Calu3 (cell line): ENCODE measurements at regions of chr1 and their contacts with region 1.

Region 1: DNA sequence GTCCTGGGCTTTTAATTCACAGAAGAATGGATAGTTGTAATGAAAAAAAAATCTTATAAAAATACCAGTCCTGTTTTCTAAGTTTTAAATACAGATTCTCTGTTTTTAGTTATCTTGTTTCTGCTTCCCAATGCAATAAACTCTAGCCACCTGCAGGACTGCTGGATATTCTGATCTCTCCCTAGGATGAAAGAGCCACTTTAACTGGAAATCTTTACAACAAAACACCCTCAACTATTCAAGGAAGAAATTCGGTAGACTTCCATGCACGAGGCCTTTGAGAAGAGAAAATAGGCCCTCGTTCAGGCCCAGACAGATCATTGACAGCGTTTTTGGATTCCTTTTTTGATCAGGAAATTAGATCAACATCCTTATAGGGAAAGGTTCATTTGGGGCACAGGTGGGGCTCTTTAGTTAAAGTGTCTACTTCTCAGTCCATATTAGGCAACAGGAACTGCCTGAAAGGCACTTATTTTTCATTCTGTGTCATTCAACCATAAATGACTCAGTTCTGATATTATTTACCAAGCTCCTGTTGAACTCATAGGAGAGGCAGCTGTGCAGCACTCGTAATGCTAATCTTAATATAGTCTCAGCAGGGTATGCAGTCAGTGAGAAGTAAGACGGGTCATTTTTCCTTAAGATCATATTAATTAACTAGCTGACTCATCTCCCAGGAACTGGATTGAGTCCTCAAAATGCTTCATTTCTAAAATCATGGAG is 71.1 kb upstream of the ERRFI1 start:
- DNase-seq: peak; percentile 50
- H3K4me3 Mint-ChIP-seq: peak overlapping the region; percentile 24
- H3K27ac Mint-ChIP-seq: peak overlapping the region; percentile 91
- H3K4me1 Mint-ChIP-seq: peaks cover 56% of the 10 kb centered on the region
- H3K27me3 Mint-ChIP-seq: no peaks in the 10 kb centered on the region
- CTCF ChIP-seq: no peak

Region 2: GRCh38 chr1:7942214-7942921 is 154.9 kb before region 1 on chr1:
- CTCF ChIA-PET with region 1: no interaction called
- intact Hi-C with region 1: no loop called
- DNase-seq: peak; percentile 31
- H3K4me3 Mint-ChIP-seq: peak overlapping the region; percentile 41
- H3K27ac Mint-ChIP-seq: no peak overlapping the region
- H3K4me1 Mint-ChIP-seq: peaks cover 24% of the 10 kb centered on the region
- H3K27me3 Mint-ChIP-seq: peaks cover 30% of the 10 kb centered on the region
- CTCF ChIP-seq: no peak

Region 3: DNA sequence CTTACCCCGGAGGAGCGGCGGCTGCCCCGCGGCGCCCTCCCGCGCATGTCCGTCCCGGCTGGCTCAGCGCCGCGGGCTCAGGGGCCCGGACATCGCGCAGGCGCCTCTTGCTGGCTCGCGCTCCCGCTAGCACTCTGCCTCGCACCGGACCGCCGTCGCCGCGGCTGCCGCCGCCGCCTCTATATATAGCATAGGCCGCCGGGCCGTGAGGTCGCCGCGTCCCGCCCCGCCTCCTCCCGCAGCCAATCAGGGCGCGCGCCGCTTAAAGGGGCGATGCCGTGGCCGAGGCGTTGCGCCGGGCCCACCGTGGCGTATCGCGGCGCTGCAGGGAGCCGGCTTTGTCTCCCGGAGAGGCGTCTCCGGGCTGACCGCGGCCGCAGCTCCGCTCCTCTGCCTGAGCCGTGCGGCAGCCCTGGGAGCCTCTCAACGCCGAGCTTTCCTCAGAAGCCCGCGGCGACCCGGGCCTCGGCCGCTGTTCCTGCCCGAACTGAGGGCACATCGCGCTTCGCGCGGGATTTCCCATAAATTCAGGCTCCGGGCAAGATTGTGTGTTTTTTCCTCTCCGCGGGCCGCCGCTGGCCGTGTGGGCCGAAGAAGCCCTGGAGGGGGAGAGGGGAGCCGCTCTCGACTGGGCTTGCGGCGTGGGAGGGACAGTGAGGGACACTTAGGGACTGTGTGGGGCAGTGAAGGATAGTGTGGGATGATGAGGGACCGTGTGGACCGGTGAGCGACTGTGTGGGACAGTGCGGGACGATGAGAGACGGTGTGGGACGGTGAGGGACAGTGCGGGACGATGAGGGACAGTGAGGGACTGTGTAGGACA is 70.9 kb before region 1 on chr1 and contains the start of gene ERRFI1:
- CTCF ChIA-PET with region 1: no interaction called
- intact Hi-C with region 1: loop called (anchors 2 kb)
- DNase-seq: peak; percentile 94
- H3K4me3 Mint-ChIP-seq: peak within 1 kb of the TSS; percentile 97
- H3K27ac Mint-ChIP-seq: peak within 1 kb of the TSS; percentile 100
- H3K4me1 Mint-ChIP-seq: peaks cover 25% of the 10 kb centered on the region
- H3K27me3 Mint-ChIP-seq: no peaks in the 10 kb centered on the region
- CTCF ChIP-seq: no peak
- total RNA-seq, gene ERRFI1: 74.9 and 83.0 TPM in 2 replicates

Region 4: GRCh38 chr1:8061210-8061609 is 36.0 kb before region 1 on chr1:
- CTCF ChIA-PET with region 1: no interaction called
- intact Hi-C with region 1: loop called (anchors 1 kb)
- DNase-seq: peak; percentile 53
- H3K4me3 Mint-ChIP-seq: peak overlapping the region; percentile 51
- H3K27ac Mint-ChIP-seq: peak overlapping the region; percentile 79
- H3K4me1 Mint-ChIP-seq: peaks cover 23% of the 10 kb centered on the region
- H3K27me3 Mint-ChIP-seq: no peaks in the 10 kb centered on the region
- CTCF ChIP-seq: no peak

Region 5: GRCh38 chr1:8137481-8138244 is 40.4 kb after region 1 on chr1:
- CTCF ChIA-PET with region 1: interaction called, 3 read pairs
- intact Hi-C with region 1: loop called (anchors 5 kb)
- DNase-seq: peak; percentile 33
- H3K4me3 Mint-ChIP-seq: peak overlapping the region; percentile 41
- H3K27ac Mint-ChIP-seq: peak overlapping the region; percentile 92
- H3K4me1 Mint-ChIP-seq: peaks cover 33% of the 10 kb centered on the region
- H3K27me3 Mint-ChIP-seq: no peaks in the 10 kb centered on the region
- CTCF ChIP-seq: no peak

Region 6: GRCh38 chr1:8182034-8182761 is 85.0 kb after region 1 on chr1:
- CTCF ChIA-PET with region 1: no interaction called
- intact Hi-C with region 1: loop called (anchors 5 kb)
- DNase-seq: peak; percentile 68
- H3K4me3 Mint-ChIP-seq: peak overlapping the region; percentile 44
- H3K27ac Mint-ChIP-seq: peak overlapping the region; percentile 91
- H3K4me1 Mint-ChIP-seq: no peaks in the 10 kb centered on the region
- H3K27me3 Mint-ChIP-seq: no peaks in the 10 kb centered on the region
- CTCF ChIP-seq: no peak

Region 7: DNA sequence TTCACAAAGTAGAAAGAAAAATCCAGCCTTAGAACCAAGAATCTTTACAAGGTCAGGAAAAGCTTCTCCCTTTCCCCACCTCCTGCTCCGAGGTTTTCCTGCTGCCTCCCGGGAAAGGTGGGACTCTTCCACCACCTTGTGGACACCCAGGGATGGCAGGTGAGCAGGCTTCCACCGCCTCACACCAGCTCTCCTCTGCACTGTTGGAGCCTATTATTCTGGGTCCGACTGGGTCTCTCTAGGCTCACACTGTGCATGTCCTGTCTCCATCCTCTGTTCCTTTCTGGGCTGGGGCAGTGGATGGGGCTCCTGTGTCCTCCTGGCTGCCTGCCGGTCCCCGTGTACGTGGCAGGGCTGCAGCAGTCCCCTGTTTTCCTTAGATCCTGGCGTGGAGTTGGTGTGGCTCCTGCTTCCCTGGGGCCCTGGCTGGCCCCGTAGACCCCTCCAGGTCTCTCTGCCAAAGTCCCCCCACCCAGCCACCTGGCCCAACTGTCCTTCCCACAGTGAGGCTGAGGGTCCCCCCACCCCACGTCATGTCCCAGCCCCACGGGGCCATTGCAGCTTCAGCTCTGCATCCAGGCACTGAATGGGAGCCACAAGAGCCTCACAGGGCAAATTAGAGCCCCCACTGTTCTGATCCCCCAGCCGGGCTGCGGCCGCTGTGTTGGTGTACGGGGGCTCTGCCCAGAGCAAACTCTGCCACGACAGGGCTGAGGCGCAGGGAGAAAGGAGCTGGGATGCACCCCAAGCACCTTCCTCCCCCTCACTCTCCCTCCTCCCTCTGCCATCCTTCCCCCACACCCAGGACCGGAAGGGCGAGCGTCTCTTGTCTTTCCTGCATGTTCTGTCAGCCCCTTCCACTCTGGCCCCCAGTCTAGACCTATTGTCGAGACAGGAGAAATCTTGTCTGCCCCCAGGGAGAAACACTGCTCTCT is 217.4 kb after region 1 on chr1:
- CTCF ChIA-PET with region 1: interaction called, 3 read pairs
- intact Hi-C with region 1: loop called (anchors 10 kb)
- DNase-seq: peak; percentile 82
- H3K4me3 Mint-ChIP-seq: no peak overlapping the region
- H3K27ac Mint-ChIP-seq: no peak overlapping the region
- H3K4me1 Mint-ChIP-seq: peaks cover 38% of the 10 kb centered on the region
- H3K27me3 Mint-ChIP-seq: no peaks in the 10 kb centered on the region
- CTCF ChIP-seq: peak; percentile 70